WTC11 (cell line): ENCODE measurements at regions of chr4 and their contacts with region 1.

Region 1: GRCh38 chr4:163554870-163555465 is 60.5 kb downstream of the TMA16 start:
- DNase-seq: no peak
- ATAC-seq: no peak
- H3K4me3 Mint-ChIP-seq: no peak overlapping the region
- H3K27ac Mint-ChIP-seq: no peak overlapping the region
- H3K4me1 Mint-ChIP-seq: no peaks in the 10 kb centered on the region
- H3K27me3 Mint-ChIP-seq: no peaks in the 10 kb centered on the region
- CTCF ChIP-seq: peak; percentile 68

Region 2: GRCh38 chr4:163611182-163611581 is 56.2 kb after region 1 on chr4:
- CTCF ChIA-PET with region 1: no interaction called
- POLR2A ChIA-PET with region 1: no interaction called
- DNase-seq: no peak
- ATAC-seq: no peak
- H3K4me3 Mint-ChIP-seq: no peak overlapping the region
- H3K27ac Mint-ChIP-seq: no peak overlapping the region
- H3K4me1 Mint-ChIP-seq: peaks cover 10% of the 10 kb centered on the region
- H3K27me3 Mint-ChIP-seq: no peaks in the 10 kb centered on the region
- CTCF ChIP-seq: no peak

Region 3: DNA sequence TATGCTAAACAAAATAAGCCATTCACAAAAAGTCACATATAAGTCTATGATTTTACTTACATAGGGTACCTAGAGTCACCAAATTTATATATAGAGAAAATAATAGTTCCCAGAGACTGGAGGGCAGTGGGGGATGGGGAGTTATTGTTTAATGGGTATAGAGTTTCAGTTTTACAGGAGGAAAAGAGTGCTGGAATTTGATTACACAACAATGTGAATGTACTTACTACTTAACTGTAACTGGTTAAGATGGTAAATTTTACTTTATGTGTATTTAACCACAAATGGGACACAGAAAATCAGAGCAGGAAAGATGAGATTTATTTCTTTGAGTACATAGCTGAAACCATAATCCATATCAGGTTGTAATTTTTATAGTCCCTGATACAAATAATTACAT is 83.9 kb after region 1 on chr4:
- CTCF ChIA-PET with region 1: no interaction called
- POLR2A ChIA-PET with region 1: no interaction called
- DNase-seq: no peak
- ATAC-seq: no peak
- H3K4me3 Mint-ChIP-seq: no peak overlapping the region
- H3K27ac Mint-ChIP-seq: no peak overlapping the region
- H3K4me1 Mint-ChIP-seq: no peaks in the 10 kb centered on the region
- H3K27me3 Mint-ChIP-seq: no peaks in the 10 kb centered on the region
- CTCF ChIP-seq: no peak

Region 4: GRCh38 chr4:164012396-164013027 is 457.5 kb after region 1 on chr4:
- CTCF ChIA-PET with region 1: interaction called, 16 read pairs
- POLR2A ChIA-PET with region 1: interaction called, 4 read pairs
- DNase-seq: peak; percentile 67
- ATAC-seq: peak; percentile 100
- H3K4me3 Mint-ChIP-seq: no peak overlapping the region
- H3K27ac Mint-ChIP-seq: no peak overlapping the region
- H3K4me1 Mint-ChIP-seq: peaks cover 4% of the 10 kb centered on the region; the same call in 1 of the 2 replicates
- H3K27me3 Mint-ChIP-seq: no peaks in the 10 kb centered on the region
- CTCF ChIP-seq: peak; percentile 50